ENCODE measurements at regions of chr1 and their contacts with region 1.

Region 1: DNA sequence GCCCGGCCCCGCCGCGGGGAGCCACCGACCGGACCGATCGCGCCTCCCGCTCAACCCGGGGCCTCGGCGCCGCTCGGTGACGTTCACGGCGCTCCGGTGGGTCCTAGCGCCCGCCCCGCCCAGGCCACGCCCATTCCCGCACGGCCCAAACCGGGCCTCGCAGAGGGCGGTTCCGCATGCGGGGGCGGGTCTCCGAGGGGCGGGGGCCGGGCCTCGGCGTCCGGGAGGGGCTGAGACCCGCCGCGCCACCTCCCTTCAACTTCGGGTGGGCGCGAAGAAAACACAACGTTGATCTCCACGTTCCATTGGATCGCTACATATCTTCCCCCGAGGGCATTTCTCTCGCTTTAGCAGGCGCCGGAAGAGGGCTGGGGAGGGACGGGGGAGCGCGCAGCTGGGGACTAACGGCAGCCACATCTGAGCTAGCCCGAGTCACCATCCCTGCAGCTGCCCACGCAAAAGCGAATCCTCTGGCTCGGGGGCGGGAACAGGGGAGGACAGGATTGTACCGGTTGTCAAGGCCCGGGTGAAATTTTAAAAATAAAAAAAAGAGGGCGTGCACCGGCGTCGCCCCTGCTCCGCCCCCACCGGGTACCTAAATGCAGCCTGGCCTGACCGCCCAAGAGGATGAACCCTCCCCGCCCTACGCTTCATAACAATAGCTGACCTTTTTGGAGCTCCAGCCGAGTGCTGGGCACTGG is at the start of gene MAD2L2:
- DNase-seq: peak; percentile 80 to 96 (median 87)
- ATAC-seq: peak; percentile 98
- H3K4me3 ChIP-seq: peak within 1 kb of the TSS; percentile 79
- H3K4me3 Mint-ChIP-seq: peak within 1 kb of the TSS; percentile 89 to 99 (median 96)
- H3K27ac ChIP-seq: peak within 1 kb of the TSS; percentile 86
- H3K27ac Mint-ChIP-seq: peak within 1 kb of the TSS; percentile 74 to 98 (median 89)
- H3K4me1 ChIP-seq: peaks cover 0 to 9% of the 10 kb centered on the region in 2 donors
- H3K4me1 Mint-ChIP-seq: peaks cover 6 to 28% (median 19%) of the 10 kb centered on the region in 7 donors
- H3K27me3 ChIP-seq: no peaks in the 10 kb centered on the region
- H3K27me3 Mint-ChIP-seq: peaks cover 0 to 12% (median 0%) of the 10 kb centered on the region in 5 donors
- total RNA-seq, gene MAD2L2: 17.1 to 53.3 (median 27.2) TPM

Region 2: GRCh38 chr1:11576109-11576875 is 104.9 kb before region 1 on chr1:
- CTCF ChIA-PET with region 1: no interaction called
- POLR2A ChIA-PET with region 1: no interaction called
- intact Hi-C with region 1: no loop called
- DNase-seq: no peak
- ATAC-seq: no peak
- H3K4me3 ChIP-seq: no peak overlapping the region
- H3K4me3 Mint-ChIP-seq: no peak overlapping the region
- H3K27ac ChIP-seq: no peak overlapping the region
- H3K27ac Mint-ChIP-seq: peak overlapping the region in 1 of 9 donors; percentile 82
- H3K4me1 ChIP-seq: no peaks in the 10 kb centered on the region
- H3K4me1 Mint-ChIP-seq: peaks cover 0 to 8% (median 3%) of the 10 kb centered on the region in 7 donors
- H3K27me3 ChIP-seq: no peaks in the 10 kb centered on the region
- H3K27me3 Mint-ChIP-seq: peaks cover 0 to 24% (median 3%) of the 10 kb centered on the region in 5 donors

Region 3: GRCh38 chr1:11654137-11654938 is 26.9 kb before region 1 on chr1 and contains the starts of genes FBXO2 and FBXO44:
- CTCF ChIA-PET with region 1: interaction called, 6 read pairs
- POLR2A ChIA-PET with region 1: no interaction called
- intact Hi-C with region 1: loop called in 1 of 2 experiments (anchors 1 kb)
- DNase-seq: peak; percentile 40 to 75 (median 63)
- ATAC-seq: peak; percentile 86
- H3K4me3 ChIP-seq: peak within 1 kb of the TSS; percentile 53
- H3K4me3 Mint-ChIP-seq: peak within 1 kb of the TSS; percentile 72 to 87 (median 78)
- H3K27ac ChIP-seq: peak within 1 kb of the TSS; percentile 71
- H3K27ac Mint-ChIP-seq: peak within 1 kb of the TSS in 5 of 9 donors; percentile 38 to 88 (median 67)
- H3K4me1 ChIP-seq: peaks cover 16 to 31% of the 10 kb centered on the region in 2 donors
- H3K4me1 Mint-ChIP-seq: peaks cover 19 to 48% (median 33%) of the 10 kb centered on the region in 7 donors
- H3K27me3 ChIP-seq: no peaks in the 10 kb centered on the region
- H3K27me3 Mint-ChIP-seq: peaks cover 0 to 17% (median 0%) of the 10 kb centered on the region in 5 donors
- total RNA-seq, gene FBXO2: 0.97 to 4.1 (median 3.7) TPM
- total RNA-seq, gene FBXO44: 35.2 to 67.1 (median 44.8) TPM

Region 4: GRCh38 chr1:11670747-11671146 is 10.5 kb before region 1 on chr1:
- CTCF ChIA-PET with region 1: interaction called, 3 read pairs
- POLR2A ChIA-PET with region 1: interaction called, 13 read pairs
- intact Hi-C with region 1: no loop called
- DNase-seq: no peak
- ATAC-seq: peak; percentile 24
- H3K4me3 ChIP-seq: no peak overlapping the region
- H3K4me3 Mint-ChIP-seq: no peak overlapping the region
- H3K27ac ChIP-seq: no peak overlapping the region
- H3K27ac Mint-ChIP-seq: no peak overlapping the region
- H3K4me1 ChIP-seq: no peaks in the 10 kb centered on the region
- H3K4me1 Mint-ChIP-seq: peaks cover 0 to 11% (median 0%) of the 10 kb centered on the region in 7 donors
- H3K27me3 ChIP-seq: no peaks in the 10 kb centered on the region
- H3K27me3 Mint-ChIP-seq: no peaks in the 10 kb centered on the region

Region 5: GRCh38 chr1:11693024-11693590 is 11.9 kb after region 1 on chr1:
- CTCF ChIA-PET with region 1: no interaction called
- POLR2A ChIA-PET with region 1: no interaction called
- intact Hi-C with region 1: no loop called
- DNase-seq: peak in 5 of 9 donors; percentile 16 to 29 (median 17)
- ATAC-seq: peak; percentile 72
- H3K4me3 ChIP-seq: no peak overlapping the region
- H3K4me3 Mint-ChIP-seq: peak overlapping the region; percentile 16 to 92 (median 64)
- H3K27ac ChIP-seq: no peak overlapping the region
- H3K27ac Mint-ChIP-seq: peak overlapping the region in 3 of 9 donors; percentile 13 to 67 (median 59)
- H3K4me1 ChIP-seq: peaks cover 11 to 24% of the 10 kb centered on the region in 2 donors
- H3K4me1 Mint-ChIP-seq: peaks cover 20 to 33% (median 23%) of the 10 kb centered on the region in 7 donors
- H3K27me3 ChIP-seq: no peaks in the 10 kb centered on the region
- H3K27me3 Mint-ChIP-seq: peaks cover 35 to 60% (median 38%) of the 10 kb centered on the region in 5 donors

Region 6: DNA sequence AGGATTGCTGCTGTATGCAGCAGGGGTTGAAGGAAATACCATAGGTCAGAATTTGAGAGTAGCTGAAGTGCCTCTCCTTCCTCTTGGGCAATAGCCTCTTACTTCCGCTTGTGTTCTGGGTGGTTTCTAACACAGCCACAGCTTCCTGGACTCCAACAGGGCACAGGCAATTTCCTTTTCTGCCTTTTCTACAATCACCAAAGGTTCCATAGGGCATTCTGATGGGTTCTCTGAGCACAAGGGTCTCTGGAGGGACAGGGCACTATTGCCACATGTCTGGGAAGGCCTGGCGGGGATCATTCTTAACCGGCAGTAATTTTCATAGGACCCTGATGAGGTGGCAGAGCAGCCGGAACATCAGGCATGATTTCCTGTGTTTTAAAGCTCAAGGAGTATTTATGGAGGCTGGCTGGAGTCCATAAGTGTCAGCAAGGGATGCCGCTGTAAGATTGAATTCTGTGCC is 49.2 kb after region 1 on chr1:
- CTCF ChIA-PET with region 1: interaction called, 3 read pairs
- POLR2A ChIA-PET with region 1: interaction called, 4 read pairs
- intact Hi-C with region 1: loop called in 1 of 2 experiments (anchors 1 kb)
- DNase-seq: peak in 7 of 9 donors; percentile 47 to 63 (median 56)
- ATAC-seq: peak; percentile 91
- H3K4me3 ChIP-seq: peak overlapping the region; percentile 48
- H3K4me3 Mint-ChIP-seq: peak overlapping the region; percentile 81 to 97 (median 91)
- H3K27ac ChIP-seq: peak overlapping the region; percentile 62
- H3K27ac Mint-ChIP-seq: peak overlapping the region; percentile 75 to 97 (median 92)
- H3K4me1 ChIP-seq: peaks cover 25 to 40% of the 10 kb centered on the region in 2 donors
- H3K4me1 Mint-ChIP-seq: peaks cover 30 to 64% (median 51%) of the 10 kb centered on the region in 7 donors
- H3K27me3 ChIP-seq: no peaks in the 10 kb centered on the region
- H3K27me3 Mint-ChIP-seq: no peaks in the 10 kb centered on the region